ENCODE measurements at regions of chr3 and their contacts with region 1.

Region 1: GRCh38 chr3:58332575-58333188 is at the start of gene PXK:
- DNase-seq: peak; percentile 84
- ATAC-seq: peak; percentile 74
- H3K4me3 Mint-ChIP-seq: peak within 1 kb of the TSS; percentile 100
- H3K27ac Mint-ChIP-seq: peak within 1 kb of the TSS; percentile 99
- H3K4me1 Mint-ChIP-seq: peaks cover 49% of the 10 kb centered on the region
- H3K27me3 Mint-ChIP-seq: no peaks in the 10 kb centered on the region
- CTCF ChIP-seq: no peak
- total RNA-seq, gene PXK: 70.3 and 81.3 TPM in 2 replicates

Region 2: GRCh38 chr3:58349792-58350626 is 17.3 kb after region 1 on chr3:
- CTCF ChIA-PET with region 1: interaction called, 125 read pairs
- POLR2A ChIA-PET with region 1: interaction called, 565 read pairs
- intact Hi-C with region 1: loop called (anchors 1 kb)
- DNase-seq: no peak
- ATAC-seq: peak; percentile 83
- H3K4me3 Mint-ChIP-seq: peak overlapping the region; percentile 71
- H3K27ac Mint-ChIP-seq: peak overlapping the region; percentile 100
- H3K4me1 Mint-ChIP-seq: peaks cover 96% of the 10 kb centered on the region
- H3K27me3 Mint-ChIP-seq: no peaks in the 10 kb centered on the region
- CTCF ChIP-seq: no peak

Region 3: GRCh38 chr3:58366699-58367098 is 34.0 kb after region 1 on chr3:
- CTCF ChIA-PET with region 1: interaction called, 3 read pairs
- POLR2A ChIA-PET with region 1: interaction called, 5 read pairs
- intact Hi-C with region 1: loop called (anchors 5 kb)
- DNase-seq: no peak
- ATAC-seq: no peak
- H3K4me3 Mint-ChIP-seq: no peak overlapping the region
- H3K27ac Mint-ChIP-seq: peak overlapping the region; percentile 59
- H3K4me1 Mint-ChIP-seq: peaks cover 59% of the 10 kb centered on the region
- H3K27me3 Mint-ChIP-seq: no peaks in the 10 kb centered on the region
- CTCF ChIP-seq: no peak

Region 4: GRCh38 chr3:58404396-58404795 is 71.7 kb after region 1 on chr3:
- CTCF ChIA-PET with region 1: interaction called, 10 read pairs
- POLR2A ChIA-PET with region 1: interaction called, 5 read pairs
- intact Hi-C with region 1: no loop called
- DNase-seq: no peak
- ATAC-seq: peak; percentile 48
- H3K4me3 Mint-ChIP-seq: no peak overlapping the region
- H3K27ac Mint-ChIP-seq: peak overlapping the region; percentile 68
- H3K4me1 Mint-ChIP-seq: peaks cover 59% of the 10 kb centered on the region
- H3K27me3 Mint-ChIP-seq: no peaks in the 10 kb centered on the region
- CTCF ChIP-seq: no peak

Region 5: DNA sequence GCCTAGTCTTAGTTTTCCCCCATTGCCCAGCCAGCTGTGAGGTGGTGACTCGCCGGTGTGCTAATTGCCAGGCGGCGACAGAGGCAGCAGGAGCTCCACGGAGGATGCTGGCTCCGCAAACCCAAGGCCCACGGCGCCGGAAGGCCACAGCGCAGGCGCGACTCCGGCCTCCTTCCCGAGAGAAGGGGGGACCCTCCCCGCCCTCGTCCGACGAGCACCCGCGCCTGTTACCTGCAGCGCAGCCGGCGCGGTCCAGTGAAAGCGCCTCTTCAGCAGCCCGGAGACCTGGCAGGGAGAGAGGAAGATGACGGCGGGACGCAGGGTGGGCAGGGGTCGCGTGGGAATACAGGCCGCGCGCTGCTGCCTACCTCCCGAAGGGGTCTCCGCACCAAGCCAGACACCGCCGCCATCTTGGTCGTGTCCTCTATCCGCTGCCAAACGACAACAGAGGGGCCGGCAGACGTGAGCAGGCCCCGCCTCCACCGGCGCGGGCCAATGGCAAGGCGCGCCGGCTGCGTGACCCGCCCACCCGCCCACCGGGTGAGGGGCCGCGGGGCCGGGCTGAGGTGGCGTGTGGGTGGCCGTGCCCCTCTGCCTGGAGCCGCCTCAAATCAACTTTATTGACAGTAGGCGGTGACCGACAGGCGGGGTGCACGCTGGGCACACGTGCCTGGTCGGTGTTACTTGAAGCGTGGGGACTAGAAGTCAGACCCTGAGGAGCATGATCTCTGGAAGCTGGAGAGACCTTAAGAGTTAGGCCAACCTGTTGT is 100.9 kb after region 1 on chr3 and contains the start of gene PDHB:
- CTCF ChIA-PET with region 1: interaction called, 3 read pairs
- POLR2A ChIA-PET with region 1: interaction called, 5 read pairs
- intact Hi-C with region 1: loop called (anchors 1 kb)
- DNase-seq: peak; percentile 86
- ATAC-seq: peak; percentile 95
- H3K4me3 Mint-ChIP-seq: peak within 1 kb of the TSS; percentile 95
- H3K27ac Mint-ChIP-seq: peak within 1 kb of the TSS; percentile 95
- H3K4me1 Mint-ChIP-seq: peaks cover 27% of the 10 kb centered on the region
- H3K27me3 Mint-ChIP-seq: no peaks in the 10 kb centered on the region
- CTCF ChIP-seq: no peak
- total RNA-seq, gene PDHB: 63.0 and 67.3 TPM in 2 replicates